Stomach (tissue), 19 donors: ENCODE measurements at regions of chr5 and their contacts with region 1.

Region 1: GRCh38 chr5:55172051-55172899 is 702 bp downstream of the CDC20B start:
- DNase-seq: peak; percentile 58 to 93
- H3K4me3 ChIP-seq: peak overlapping the region; percentile 44 to 65 (median 55)
- H3K27ac ChIP-seq: peak overlapping the region in 2 of 5 donors; percentile 3 to 10
- H3K4me1 ChIP-seq: peaks cover 22 to 37% (median 33%) of the 10 kb centered on the region in 4 donors
- H3K27me3 ChIP-seq: peaks cover 3 to 80% (median 30%) of the 10 kb centered on the region in 3 donors
- CTCF ChIP-seq: peak in 5 of 7 experiments; percentile 69 to 84 (median 80)
- EP300 ChIP-seq: no peak
- POLR2A ChIP-seq: no peak

Region 2: DNA sequence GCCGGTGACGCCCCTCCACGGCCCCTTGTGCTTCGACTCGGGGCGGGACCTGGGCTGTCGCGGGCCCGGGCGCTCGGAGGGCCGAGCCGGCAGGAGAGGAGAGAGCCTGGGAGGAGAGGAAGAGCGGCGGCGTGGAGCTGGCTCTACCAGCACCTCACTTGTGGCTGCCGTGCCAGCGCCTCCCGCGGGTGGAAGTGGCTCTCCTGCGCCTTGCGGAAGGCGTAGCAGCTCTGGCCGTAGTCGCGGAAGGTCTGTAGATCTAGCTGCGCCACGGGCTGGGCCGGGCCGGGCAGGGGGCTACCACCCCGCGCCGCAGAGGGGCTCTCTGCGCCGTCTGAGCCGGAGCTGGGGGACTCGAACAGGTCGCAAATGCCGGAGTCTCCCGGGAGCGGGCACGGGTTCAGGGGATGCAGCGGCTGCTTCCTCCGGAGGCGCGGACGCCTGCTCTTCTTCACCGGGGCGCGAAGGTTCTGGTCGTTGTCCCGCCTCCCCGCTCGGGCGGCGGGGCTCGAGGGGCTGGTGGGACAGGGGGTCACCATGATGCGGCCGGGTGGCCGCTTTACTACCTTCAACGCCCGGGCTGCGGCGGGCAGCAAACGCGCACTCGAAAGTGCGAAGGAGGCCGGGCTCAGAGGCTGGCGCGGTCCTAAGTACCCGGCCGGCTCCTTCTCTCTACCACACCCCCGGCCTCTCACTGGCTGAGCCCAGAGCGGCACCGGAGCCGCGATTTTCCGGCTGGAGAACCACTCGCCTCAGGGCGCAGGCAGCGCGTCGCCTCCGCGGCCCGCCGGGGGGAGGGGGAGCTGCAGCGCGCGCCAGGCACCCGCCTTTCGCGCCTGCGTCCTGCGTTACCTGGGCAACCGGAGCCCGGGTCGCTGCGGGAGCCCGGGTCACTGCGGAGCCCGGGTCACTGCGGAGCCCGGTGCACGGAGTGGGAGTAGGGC is 61.0 kb after region 1 on chr5 and contains the start of gene CCNO:
- intact Hi-C with region 1: loop called (anchors 10 kb)
- DNase-seq: peak; percentile 88 to 89
- H3K4me3 ChIP-seq: peak within 1 kb of the TSS; percentile 54 to 78 (median 55)
- H3K27ac ChIP-seq: peak within 1 kb of the TSS; percentile 82 to 93 (median 86)
- H3K4me1 ChIP-seq: peaks cover 31 to 46% (median 43%) of the 10 kb centered on the region in 4 donors
- H3K27me3 ChIP-seq: peaks cover 25 to 88% (median 66%) of the 10 kb centered on the region in 3 donors
- CTCF ChIP-seq: peak in 1 of 7 experiments; percentile 7
- EP300 ChIP-seq: no peak
- POLR2A ChIP-seq: no peak
- total RNA-seq, gene CCNO: 0.55 to 32.1 (median 4.5) TPM in 4 of 5 donors, not detected in the other

Region 3: DNA sequence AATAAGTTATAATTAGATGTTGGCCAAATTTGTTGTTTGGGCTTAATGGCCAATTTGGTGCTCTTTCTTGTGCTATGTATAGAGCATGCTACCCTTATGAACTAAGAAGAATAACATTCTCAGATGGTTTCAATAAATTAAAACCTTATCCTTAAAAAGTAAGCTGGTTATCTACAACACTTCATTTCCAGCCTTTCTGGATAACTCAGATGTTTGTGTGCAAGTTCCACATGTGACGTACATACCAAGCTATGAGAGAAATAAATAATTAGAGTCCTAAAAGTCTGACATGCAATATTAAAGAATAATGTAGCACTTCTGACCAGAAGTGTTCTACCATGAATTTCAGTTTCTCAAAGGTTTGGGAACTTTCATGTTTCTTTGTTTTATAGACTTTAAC is 147.2 kb after region 1 on chr5:
- intact Hi-C with region 1: no loop called
- DNase-seq: no peak
- H3K4me3 ChIP-seq: no peak overlapping the region
- H3K27ac ChIP-seq: no peak overlapping the region
- H3K4me1 ChIP-seq: peaks cover 3 to 37% (median 17%) of the 10 kb centered on the region in 4 donors
- H3K27me3 ChIP-seq: no peaks in the 10 kb centered on the region
- CTCF ChIP-seq: no peak
- EP300 ChIP-seq: no peak
- POLR2A ChIP-seq: no peak